PC-9 (cell line): ENCODE measurements at regions of chr7 and their contacts with region 1.

Region 1: GRCh38 chr7:101099969-101100781 is 14.9 kb downstream of the TRIM56 start:
- DNase-seq: peak; percentile 95 to 98
- H3K4me3 ChIP-seq: peak overlapping the region; percentile 43; the same call in 1 of the 2 replicates
- H3K27ac ChIP-seq: peak overlapping the region; percentile 93
- H3K4me1 ChIP-seq: peaks cover 53% of the 10 kb centered on the region
- H3K27me3 ChIP-seq: no peaks in the 10 kb centered on the region
- CTCF ChIP-seq: no peak

Region 2: DNA sequence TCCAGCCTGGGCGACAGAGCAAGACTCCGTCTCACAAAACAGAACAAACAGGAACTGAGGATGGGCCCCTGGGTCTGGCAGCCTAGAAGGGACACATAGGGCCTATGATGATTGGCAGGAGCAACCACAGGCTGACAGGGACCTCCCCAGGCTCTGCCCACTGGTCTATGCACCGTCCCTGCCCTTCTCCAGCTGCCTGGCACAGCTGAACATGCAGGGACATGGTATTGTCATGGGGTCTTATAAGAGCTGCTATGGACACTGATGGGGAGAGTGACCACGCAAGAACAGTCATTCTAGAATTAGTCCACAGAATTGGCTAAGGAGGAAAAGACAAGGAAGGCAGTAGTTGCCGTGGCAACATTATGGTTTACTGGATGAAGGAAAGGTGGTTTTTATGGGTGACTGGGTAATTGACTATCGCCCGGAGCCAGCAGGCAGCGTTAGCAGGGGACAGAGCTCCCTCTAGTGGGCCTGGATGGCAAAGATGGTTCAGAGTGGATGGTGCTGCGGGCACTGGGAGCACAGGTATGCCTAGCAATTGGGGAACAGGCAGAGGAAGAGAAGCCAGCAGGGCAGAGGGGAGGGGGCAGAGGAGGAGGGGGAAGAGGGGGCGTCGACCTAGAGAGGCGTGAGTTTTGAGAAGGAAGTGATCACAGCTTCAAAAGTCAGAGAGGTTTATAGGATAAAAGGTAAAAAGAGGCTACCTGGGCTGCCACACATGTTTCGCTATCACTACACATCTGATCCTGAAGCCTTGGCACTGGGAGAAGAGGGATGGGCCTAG is 22.7 kb before region 1 on chr7:
- CTCF ChIA-PET with region 1: interaction called, 3 read pairs
- POLR2A ChIA-PET with region 1: interaction called, 16 read pairs
- intact Hi-C with region 1: no loop called
- DNase-seq: peak; percentile 86 to 96
- H3K4me3 ChIP-seq: no peak overlapping the region
- H3K27ac ChIP-seq: no peak overlapping the region
- H3K4me1 ChIP-seq: peaks cover 25% of the 10 kb centered on the region
- H3K27me3 ChIP-seq: no peaks in the 10 kb centered on the region
- CTCF ChIP-seq: peak; percentile 92

Region 3: GRCh38 chr7:101116898-101117297 is 16.7 kb after region 1 on chr7:
- CTCF ChIA-PET with region 1: interaction called, 5 read pairs
- POLR2A ChIA-PET with region 1: interaction called, 27 read pairs
- intact Hi-C with region 1: loop called (anchors 1 kb)
- DNase-seq: no peak
- H3K4me3 ChIP-seq: no peak overlapping the region
- H3K27ac ChIP-seq: peak overlapping the region; percentile 99
- H3K4me1 ChIP-seq: peaks cover 58% of the 10 kb centered on the region
- H3K27me3 ChIP-seq: no peaks in the 10 kb centered on the region
- CTCF ChIP-seq: no peak

Region 4: GRCh38 chr7:101159696-101160654 is 59.8 kb after region 1 on chr7:
- CTCF ChIA-PET with region 1: interaction called, 3 read pairs
- POLR2A ChIA-PET with region 1: interaction called, 11 read pairs
- intact Hi-C with region 1: no loop called
- DNase-seq: no peak
- H3K4me3 ChIP-seq: no peak overlapping the region
- H3K27ac ChIP-seq: peak overlapping the region; percentile 51
- H3K4me1 ChIP-seq: peaks cover 78% of the 10 kb centered on the region
- H3K27me3 ChIP-seq: no peaks in the 10 kb centered on the region
- CTCF ChIP-seq: no peak

Region 5: DNA sequence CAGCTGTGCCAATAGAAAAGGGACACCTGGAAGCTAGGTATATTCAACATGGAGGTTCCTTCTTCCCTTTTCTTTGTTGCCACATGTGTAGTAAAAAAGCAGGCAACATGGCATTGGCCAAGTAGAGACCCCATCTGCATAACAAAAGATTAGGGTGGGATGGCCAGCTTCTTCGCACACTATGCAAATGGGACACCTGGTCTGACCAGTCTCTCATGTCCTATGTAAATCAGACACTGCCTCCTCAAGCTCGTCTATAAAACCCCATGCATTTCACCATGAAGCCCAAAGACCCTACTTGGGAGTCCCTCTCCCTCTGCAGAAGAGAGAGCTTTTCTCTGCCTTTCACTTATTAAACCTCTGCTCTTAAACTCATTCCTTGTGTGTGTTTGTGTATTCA is 475.0 kb after region 1 on chr7:
- CTCF ChIA-PET with region 1: no interaction called
- POLR2A ChIA-PET with region 1: no interaction called
- intact Hi-C with region 1: no loop called
- DNase-seq: no peak
- H3K4me3 ChIP-seq: no peak overlapping the region
- H3K27ac ChIP-seq: no peak overlapping the region
- H3K4me1 ChIP-seq: no peaks in the 10 kb centered on the region
- H3K27me3 ChIP-seq: peaks cover 7% of the 10 kb centered on the region; the same call in 1 of the 2 replicates
- CTCF ChIP-seq: no peak